ENCODE measurements at regions of chr11 and their contacts with region 1.

Region 1: DNA sequence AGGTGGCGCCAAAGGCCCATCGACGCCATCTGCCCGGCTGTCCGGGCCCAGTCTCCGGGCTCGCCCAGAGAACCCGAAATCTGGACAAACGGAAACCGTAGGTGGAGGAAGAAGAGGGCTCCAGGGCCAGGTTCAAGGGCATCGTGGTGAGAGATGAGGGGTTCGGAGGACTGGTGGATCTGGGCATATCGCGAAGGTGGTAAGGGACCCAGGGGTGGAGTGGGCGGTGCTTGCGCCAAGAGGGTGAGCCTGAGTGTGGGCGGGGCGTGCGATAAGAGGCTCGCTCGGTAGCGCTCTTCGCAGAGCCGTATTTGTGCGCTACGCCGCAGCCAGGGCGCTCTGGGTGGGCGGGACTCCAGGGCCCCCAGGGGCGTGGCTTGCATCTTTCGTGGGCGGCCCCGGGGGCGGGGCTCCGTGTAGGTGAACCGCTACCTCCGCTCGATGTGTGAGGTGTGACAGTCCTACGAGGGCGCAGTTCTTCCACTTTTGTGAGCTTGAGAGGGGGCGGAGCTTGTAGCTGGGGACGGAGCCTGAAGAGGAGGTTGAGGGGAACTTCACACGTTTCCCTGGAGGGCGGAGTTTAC is 4.8 kb downstream of the CD248 start:
- DNase-seq: peak; percentile 97
- H3K4me3 Mint-ChIP-seq: peak overlapping the region; percentile 77
- H3K27ac Mint-ChIP-seq: peak overlapping the region; percentile 77
- H3K4me1 Mint-ChIP-seq: peaks cover 5% of the 10 kb centered on the region
- H3K27me3 Mint-ChIP-seq: no peaks in the 10 kb centered on the region

Region 2: DNA sequence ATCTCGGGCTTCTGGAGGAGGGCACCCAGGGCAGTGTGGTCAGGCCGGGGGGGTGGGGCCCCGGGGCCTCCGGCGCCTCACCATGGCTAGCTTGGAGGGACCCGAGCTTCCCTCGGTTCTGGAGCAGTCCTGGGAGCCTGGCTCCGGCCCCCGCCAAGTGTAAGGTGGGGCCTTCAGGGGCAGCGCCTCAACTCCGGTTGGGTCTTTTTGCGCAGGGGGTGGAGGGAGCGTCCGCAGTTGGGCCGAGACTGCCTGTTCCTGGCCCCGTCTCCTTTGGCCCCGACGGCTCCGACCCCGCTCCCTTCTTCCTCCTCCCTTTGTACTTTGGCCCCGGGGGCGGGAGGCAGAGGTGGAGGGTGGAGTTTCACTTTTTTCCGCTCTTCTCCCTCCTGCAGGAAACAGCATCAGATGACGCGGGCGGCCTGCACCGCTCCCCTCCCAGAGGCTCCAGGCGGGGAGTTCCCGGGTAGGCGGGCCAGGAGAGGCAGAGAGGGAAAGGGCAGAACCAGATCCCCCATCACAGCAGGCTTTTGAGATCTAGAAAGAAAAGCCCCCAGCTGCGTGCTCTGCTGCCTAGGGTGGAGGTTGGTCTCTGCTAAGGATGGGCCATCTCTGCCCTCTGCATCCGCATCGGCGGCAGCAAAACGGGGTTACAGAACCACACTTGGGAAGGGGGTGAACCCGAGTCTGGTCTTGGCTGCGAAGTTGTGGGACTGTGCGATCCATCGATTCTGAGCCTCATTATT is 698.0 kb before region 1 on chr11 and contains the start of gene MAP3K11:
- CTCF ChIA-PET with region 1: no interaction called
- POLR2A ChIA-PET with region 1: no interaction called
- intact Hi-C with region 1: no loop called
- DNase-seq: peak; percentile 97
- H3K4me3 Mint-ChIP-seq: peak within 1 kb of the TSS; percentile 95
- H3K27ac Mint-ChIP-seq: peak within 1 kb of the TSS; percentile 98
- H3K4me1 Mint-ChIP-seq: peaks cover 55% of the 10 kb centered on the region
- H3K27me3 Mint-ChIP-seq: peaks cover 3% of the 10 kb centered on the region
- total RNA-seq, gene MAP3K11: 56.7 to 62.6 TPM

Region 3: DNA sequence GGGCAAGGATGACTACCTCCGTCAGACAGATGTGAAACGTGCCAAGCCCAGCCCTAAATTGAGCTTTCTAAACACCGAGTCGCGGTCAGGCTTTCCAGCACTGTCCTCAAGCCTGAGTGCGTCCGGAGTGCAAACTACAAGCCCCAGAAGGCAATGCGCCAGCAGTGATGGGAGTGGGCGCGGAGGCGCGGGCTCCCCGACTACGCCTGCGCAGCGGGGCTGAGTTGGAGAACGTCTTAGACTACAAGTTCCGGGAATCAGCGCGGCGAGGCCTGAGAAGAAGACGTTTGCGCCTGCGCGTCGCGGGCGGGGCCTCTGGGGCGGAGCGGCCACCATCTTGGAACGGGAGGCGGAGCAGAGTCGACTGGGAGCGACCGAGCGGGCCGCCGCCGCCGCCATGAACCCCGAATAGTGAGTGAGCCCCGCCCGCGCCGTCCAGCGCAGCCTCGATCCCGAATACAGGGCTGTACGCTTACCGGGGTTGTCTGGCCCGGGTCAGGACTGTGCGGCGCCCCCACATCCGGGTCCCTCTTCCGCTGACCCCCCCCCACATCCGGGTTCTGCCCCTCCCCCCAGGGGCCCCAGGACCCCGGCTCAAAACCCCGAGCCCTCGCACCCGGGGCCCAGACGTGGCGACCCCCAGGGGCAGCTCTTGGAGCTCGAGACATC is 43.6 kb before region 1 on chr11 and contains the start of gene RAB1B:
- CTCF ChIA-PET with region 1: interaction called, 3 read pairs
- POLR2A ChIA-PET with region 1: no interaction called
- intact Hi-C with region 1: loop called (anchors 1 kb)
- DNase-seq: peak; percentile 100
- H3K4me3 Mint-ChIP-seq: peak within 1 kb of the TSS; percentile 86
- H3K27ac Mint-ChIP-seq: peak within 1 kb of the TSS; percentile 90
- H3K4me1 Mint-ChIP-seq: peaks cover 32% of the 10 kb centered on the region
- H3K27me3 Mint-ChIP-seq: no peaks in the 10 kb centered on the region
- total RNA-seq, gene RAB1B: 118 to 124 TPM

Region 4: GRCh38 chr11:66299186-66299585 is 12.9 kb before region 1 on chr11:
- CTCF ChIA-PET with region 1: interaction called, 14 read pairs
- POLR2A ChIA-PET with region 1: no interaction called
- intact Hi-C with region 1: no loop called
- DNase-seq: no peak
- H3K4me3 Mint-ChIP-seq: no peak overlapping the region
- H3K27ac Mint-ChIP-seq: no peak overlapping the region
- H3K4me1 Mint-ChIP-seq: no peaks in the 10 kb centered on the region
- H3K27me3 Mint-ChIP-seq: peaks cover 2% of the 10 kb centered on the region

Region 5: DNA sequence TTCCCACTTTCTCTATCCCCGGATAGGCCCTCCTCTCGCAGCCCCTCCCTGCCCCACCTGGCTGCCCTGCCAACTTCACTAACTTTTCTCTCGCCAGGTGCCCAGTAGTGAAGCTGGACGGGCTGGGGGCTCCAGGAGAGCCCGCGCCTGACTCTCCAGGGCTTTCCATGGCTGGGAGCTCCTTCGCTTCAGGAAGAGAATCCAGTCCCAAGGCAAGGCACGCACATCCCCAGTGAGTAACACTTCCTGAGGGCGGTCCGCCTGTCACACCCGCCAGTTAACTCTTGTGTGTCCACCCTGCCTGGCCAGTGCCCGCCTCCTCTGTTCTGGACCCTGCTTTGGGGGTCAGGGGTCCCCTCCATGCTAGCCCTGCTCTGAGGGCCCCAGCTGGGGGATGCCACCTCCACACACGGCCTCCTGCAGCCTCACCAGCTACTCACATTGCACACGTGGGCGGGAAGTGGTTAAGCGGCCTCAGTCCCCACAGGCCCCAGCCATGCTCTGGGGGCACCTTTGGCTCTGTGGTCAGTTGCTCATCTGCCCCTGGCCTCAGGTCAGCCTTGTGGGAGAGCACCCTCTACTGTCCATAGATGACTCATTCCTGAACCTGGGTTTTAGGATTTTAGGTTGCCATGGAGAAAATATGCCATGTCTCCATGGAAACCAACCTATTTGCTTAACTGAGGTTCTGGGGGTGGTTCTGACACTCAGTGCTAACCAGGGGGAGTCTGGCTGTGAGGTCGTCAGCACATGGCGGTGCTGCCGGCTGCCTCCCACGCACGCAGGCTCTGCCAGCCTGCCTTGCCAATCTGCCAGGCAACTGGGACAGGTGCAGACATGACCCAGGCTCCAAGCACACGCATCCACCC is 24.4 kb after region 1 on chr11 and contains the start of gene RIN1:
- CTCF ChIA-PET with region 1: interaction called, 30 read pairs
- POLR2A ChIA-PET with region 1: interaction called, 3 read pairs
- intact Hi-C with region 1: no loop called
- DNase-seq: peak; percentile 84
- H3K4me3 Mint-ChIP-seq: peak within 1 kb of the TSS; percentile 61
- H3K27ac Mint-ChIP-seq: peak within 1 kb of the TSS; percentile 23
- H3K4me1 Mint-ChIP-seq: peaks cover 22% of the 10 kb centered on the region
- H3K27me3 Mint-ChIP-seq: no peaks in the 10 kb centered on the region
- total RNA-seq, gene RIN1: 1.0 to 1.6 TPM

Region 6: GRCh38 chr11:66371627-66372415 is 59.8 kb after region 1 on chr11 and contains the start of gene SLC29A2:
- CTCF ChIA-PET with region 1: interaction called, 14 read pairs
- POLR2A ChIA-PET with region 1: interaction called, 5 read pairs
- intact Hi-C with region 1: loop called (anchors 1 kb)
- DNase-seq: peak; percentile 90
- H3K4me3 Mint-ChIP-seq: peak within 1 kb of the TSS; percentile 83
- H3K27ac Mint-ChIP-seq: peak within 1 kb of the TSS; percentile 86
- H3K4me1 Mint-ChIP-seq: peaks cover 16% of the 10 kb centered on the region
- H3K27me3 Mint-ChIP-seq: no peaks in the 10 kb centered on the region
- total RNA-seq, gene SLC29A2: 10.3 to 10.6 TPM

Measured in activated CD4-positive, alpha-beta memory T cell treated with anti-CD3 and anti-CD28 coated beads for 36 hours (primary cell).